Astrocyte of the cerebellum (primary cell): ENCODE measurements at regions of chr6 and their contacts with region 1.

Region 1: GRCh38 chr6:16183187-16183664 is 54.3 kb downstream of the MYLIP start:
- DNase-seq: peak; percentile 19
- H3K4me3 ChIP-seq: no peak overlapping the region
- CTCF ChIP-seq: peak; percentile 49

Region 2: DNA sequence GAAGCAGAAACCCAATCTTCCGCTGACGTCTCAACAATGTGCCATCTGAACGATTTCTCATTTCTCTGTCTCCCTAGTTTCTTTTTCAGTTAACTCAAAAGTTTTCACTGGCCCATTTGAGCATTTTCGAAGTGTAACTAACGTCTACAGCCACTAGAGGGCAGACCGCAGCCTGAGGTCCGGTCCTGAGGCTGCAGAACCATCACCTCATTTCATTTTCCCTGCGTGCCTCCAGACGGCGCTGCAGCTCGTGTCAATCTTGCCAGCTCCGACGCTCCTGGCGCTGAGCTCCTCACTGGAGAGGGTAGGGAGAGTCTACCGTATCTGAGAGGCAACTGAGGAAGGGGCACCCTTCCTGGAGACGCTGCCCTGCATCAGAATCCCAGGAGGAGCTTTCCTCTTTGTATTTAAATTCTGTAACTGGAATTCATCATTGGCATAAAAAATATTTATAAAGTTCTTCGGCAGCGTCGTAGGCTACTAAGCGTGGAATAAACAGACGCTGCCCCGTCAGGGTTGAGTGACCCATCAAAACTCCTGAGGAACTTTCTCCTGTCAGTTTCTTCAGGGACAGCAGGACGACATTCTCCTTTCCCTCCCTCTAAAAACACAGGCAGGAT is 491.9 kb before region 1 on chr6:
- in situ Hi-C with region 1: loop called (anchors 25 kb)
- DNase-seq: peak; percentile 75
- H3K4me3 ChIP-seq: no peak overlapping the region
- CTCF ChIP-seq: peak; percentile 100

Region 3: DNA sequence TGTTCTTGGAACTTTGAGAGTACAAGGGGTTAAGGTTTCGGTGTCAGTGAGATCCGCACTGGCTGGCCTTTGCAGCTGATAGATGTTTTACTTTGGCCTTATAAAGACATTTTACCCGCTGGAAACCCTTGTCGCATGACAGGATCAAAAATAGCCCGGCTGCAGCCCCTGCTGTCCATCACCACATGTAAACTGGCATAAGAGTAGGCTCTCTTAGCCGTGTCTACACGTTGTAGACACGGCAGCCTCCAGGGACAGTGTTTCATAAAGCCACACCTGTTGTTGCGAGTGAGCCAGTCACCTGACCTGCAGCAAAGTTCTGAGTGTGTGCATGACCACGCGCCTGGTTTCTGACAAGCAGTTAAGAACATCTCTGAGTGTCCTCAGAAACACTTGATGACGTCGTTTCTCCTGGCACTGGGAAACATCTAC is 1106.4 kb after region 1 on chr6:
- in situ Hi-C with region 1: no loop called
- DNase-seq: no peak
- H3K4me3 ChIP-seq: no peak overlapping the region
- CTCF ChIP-seq: no peak